K562 (cell line): ENCODE measurements at regions of chr1 and their contacts with region 1.

Region 1: DNA sequence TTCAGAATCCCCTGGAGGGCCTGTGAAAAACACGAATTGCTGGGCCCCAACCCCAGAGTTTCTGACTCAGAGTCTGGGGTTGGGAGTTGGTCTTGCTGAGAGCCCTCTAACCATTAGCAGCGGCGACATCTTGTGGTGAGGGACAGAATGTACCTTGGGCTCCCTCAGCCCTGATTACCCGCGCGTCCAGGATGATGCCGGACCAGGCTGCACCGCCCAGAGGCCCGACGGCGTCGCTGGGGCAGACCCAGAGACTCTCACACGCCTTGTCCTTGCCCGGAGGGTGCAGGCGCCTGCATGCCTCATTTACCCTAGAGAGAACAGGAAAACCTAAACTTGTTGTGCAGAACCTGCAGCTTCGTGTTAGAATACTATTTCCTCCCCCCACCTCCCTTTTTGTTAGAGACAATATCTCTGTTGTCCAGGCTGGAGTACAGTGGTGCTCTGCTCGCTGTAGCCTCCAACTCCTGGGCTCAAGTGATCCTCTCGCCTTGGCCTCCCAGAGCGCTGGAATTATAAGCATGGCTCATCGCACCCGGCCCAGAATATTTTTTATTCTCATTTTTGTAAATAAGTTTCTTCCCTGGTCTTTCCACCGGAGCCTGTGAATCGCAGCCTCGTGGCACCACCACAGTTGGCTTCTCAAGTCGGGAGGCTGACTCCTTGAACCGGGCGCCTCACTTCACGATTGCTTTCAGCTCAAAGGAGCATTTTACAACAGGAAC is 22.2 kb upstream of the RD3 start:
- DNase-seq: peak; percentile 91 to 96 (median 92)
- ATAC-seq: peak; percentile 91
- H3K4me3 ChIP-seq: no peak overlapping the region
- H3K27ac ChIP-seq: no peak overlapping the region
- H3K4me1 ChIP-seq: peaks cover 15 to 30% of the 10 kb centered on the region in 2 experiments
- H3K27me3 ChIP-seq: no peaks in the 10 kb centered on the region
- CTCF ChIP-seq: peak; percentile 95 to 98 (median 97)
- EP300 ChIP-seq: peak; percentile 22; the same call in 1 of the 2 replicates
- POLR2A ChIP-seq: no peak
- RAD21 ChIP-seq: peak; percentile 95 to 97

Region 2: DNA sequence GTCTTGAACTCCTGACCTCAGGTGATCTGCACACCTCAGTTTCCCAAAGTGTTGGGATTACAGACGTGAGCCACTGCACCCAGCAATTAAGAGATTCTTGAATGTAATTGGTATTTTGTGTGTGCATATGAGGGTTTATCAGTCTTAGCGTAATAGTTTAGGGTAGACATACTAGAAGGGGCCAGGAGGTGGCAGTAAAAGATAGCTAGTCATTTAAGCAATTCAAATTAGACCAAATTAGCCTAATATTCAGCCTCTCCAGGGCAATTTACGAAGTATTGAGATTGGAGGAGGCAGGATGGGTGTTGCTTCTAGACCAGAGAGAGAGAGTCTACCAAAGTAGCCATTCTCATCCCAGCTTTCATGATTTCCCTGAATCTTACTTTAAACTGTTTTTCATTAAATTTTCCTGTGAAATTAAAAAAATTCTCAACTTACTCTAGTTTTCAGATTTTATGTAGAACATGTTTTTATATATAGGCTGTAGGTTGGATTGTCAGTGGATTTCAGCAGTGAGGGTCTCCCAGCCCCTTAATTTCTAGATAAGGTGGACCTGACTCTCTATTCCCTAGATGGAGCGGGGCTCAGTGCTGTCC is 1065.8 kb before region 1 on chr1:
- CTCF ChIA-PET with region 1: interaction called, 3 read pairs
- POLR2A ChIA-PET with region 1: no interaction called
- in situ Hi-C with region 1: no loop called
- intact Hi-C with region 1: loop called (anchors 5 kb)
- DNase-seq: peak; percentile 33 to 44 (median 41)
- ATAC-seq: peak; percentile 82
- H3K4me3 ChIP-seq: no peak overlapping the region
- H3K27ac ChIP-seq: no peak overlapping the region
- H3K4me1 ChIP-seq: no peaks in the 10 kb centered on the region
- H3K27me3 ChIP-seq: peaks cover 0 to 8% of the 10 kb centered on the region in 2 experiments; a peak in 3 of 5 replicates
- CTCF ChIP-seq: peak; percentile 42 to 73 (median 56); a peak in 5 of 6 replicates
- EP300 ChIP-seq: no peak
- POLR2A ChIP-seq: no peak
- RAD21 ChIP-seq: peak; percentile 88 to 89

Region 3: GRCh38 chr1:211258756-211259637 is 255.2 kb before region 1 on chr1 and contains the start of gene RCOR3:
- CTCF ChIA-PET with region 1: no interaction called
- POLR2A ChIA-PET with region 1: no interaction called
- in situ Hi-C with region 1: no loop called
- intact Hi-C with region 1: loop called (anchors 2 kb)
- DNase-seq: peak; percentile 93 to 98 (median 94)
- ATAC-seq: peak; percentile 83
- H3K4me3 ChIP-seq: peak within 1 kb of the TSS; percentile 93
- H3K27ac ChIP-seq: peak within 1 kb of the TSS; percentile 97
- H3K4me1 ChIP-seq: peaks cover 7 to 19% of the 10 kb centered on the region in 2 experiments; a peak in 3 of 5 replicates
- H3K27me3 ChIP-seq: no peaks in the 10 kb centered on the region
- CTCF ChIP-seq: peak; percentile 70 to 84 (median 84)
- EP300 ChIP-seq: peak; percentile 53
- POLR2A ChIP-seq: peak; percentile 88
- RAD21 ChIP-seq: peak; percentile 42 to 54; a peak in 3 of 4 replicates
- polyA plus RNA-seq, gene RCOR3: 9.7 to 10.5 TPM

Region 4: GRCh38 chr1:211323156-211324063 is 190.8 kb before region 1 on chr1:
- CTCF ChIA-PET with region 1: interaction called, 13 read pairs
- POLR2A ChIA-PET with region 1: no interaction called
- in situ Hi-C with region 1: no loop called
- intact Hi-C with region 1: loop called (anchors 1 kb)
- DNase-seq: peak; percentile 42 to 85 (median 62)
- ATAC-seq: peak; percentile 79
- H3K4me3 ChIP-seq: no peak overlapping the region
- H3K27ac ChIP-seq: no peak overlapping the region
- H3K4me1 ChIP-seq: peaks cover 17 to 24% of the 10 kb centered on the region in 2 experiments
- H3K27me3 ChIP-seq: no peaks in the 10 kb centered on the region
- CTCF ChIP-seq: peak; percentile 91 to 95 (median 91)
- EP300 ChIP-seq: no peak
- POLR2A ChIP-seq: no peak
- RAD21 ChIP-seq: peak; percentile 92 to 95

Region 5: DNA sequence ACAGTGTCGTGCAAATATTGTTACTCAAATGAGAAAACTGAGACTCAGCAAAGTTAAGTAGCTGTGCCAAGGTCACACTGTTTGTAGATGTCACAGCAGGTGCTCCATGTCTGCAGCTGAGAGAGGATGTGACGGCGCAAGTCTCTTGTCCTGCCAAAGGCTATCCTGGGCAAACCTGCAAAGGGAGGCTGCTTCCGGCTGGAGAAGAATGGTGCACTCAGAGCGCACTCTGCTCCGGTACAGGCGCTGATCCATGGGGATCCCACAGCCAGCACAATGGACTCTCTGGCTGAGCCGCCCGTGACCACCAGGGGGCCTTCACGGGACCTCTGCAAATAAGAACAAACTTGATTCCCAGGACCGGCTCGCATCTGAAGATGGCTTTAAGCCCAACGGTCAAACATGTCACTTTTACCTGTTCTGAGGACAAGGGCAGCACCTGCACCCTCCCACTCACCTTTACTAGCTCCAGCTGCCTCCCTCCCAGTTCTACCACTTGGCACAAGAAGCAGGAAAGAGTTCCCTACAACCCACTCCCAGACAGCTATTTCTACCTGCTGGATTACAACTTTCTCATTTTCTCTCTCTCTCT is 44.2 kb before region 1 on chr1:
- CTCF ChIA-PET with region 1: no interaction called
- POLR2A ChIA-PET with region 1: no interaction called
- in situ Hi-C with region 1: no loop called
- intact Hi-C with region 1: loop called (anchors 1 kb)
- DNase-seq: peak; percentile 75 to 88 (median 78)
- ATAC-seq: peak; percentile 99
- H3K4me3 ChIP-seq: no peak overlapping the region
- H3K27ac ChIP-seq: no peak overlapping the region
- H3K4me1 ChIP-seq: peaks cover 0 to 5% of the 10 kb centered on the region in 2 experiments; a peak in 2 of 5 replicates
- H3K27me3 ChIP-seq: no peaks in the 10 kb centered on the region; a peak in 1 of 5 replicates
- CTCF ChIP-seq: peak; percentile 89 to 97 (median 92)
- EP300 ChIP-seq: no peak
- POLR2A ChIP-seq: no peak
- RAD21 ChIP-seq: peak; percentile 44 to 80; a peak in 3 of 4 replicates

Region 6: DNA sequence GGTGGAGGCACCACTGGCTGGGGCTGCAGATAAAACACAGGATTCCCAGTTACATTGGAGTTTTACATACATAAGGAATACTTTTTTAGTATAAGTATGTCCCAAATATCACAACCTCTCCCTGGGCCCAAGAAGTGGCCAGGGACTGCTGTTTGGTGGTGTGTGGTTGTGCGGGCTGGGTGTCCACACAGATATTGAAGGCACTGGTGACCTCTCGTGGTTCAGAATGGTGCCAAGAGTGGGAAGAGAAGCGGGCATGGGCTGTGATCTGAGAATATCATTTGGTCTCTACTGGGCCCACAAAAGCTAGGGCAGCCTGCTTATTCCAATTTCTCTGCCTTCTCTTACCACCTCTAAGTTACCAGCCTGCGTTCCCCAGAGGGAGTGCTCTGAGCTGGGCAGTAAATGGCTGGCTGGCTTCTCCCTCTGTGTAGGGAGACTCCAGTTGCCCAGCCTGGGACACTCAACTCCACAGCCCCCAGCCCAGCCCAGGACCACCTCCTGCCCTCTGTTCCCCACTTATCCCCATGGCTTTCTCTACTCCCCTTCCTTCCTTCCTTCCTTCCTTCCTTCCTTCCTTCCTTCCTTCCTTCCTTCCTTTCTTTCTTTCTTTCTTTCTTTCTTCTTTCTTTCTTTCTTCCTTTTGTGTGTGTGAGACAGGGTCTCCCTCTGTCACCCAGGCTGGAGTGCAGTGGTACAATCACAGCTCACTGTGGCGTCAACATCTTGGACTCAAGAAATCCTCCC is 20.5 kb after region 1 on chr1:
- CTCF ChIA-PET with region 1: no interaction called
- POLR2A ChIA-PET with region 1: no interaction called
- in situ Hi-C with region 1: no loop called
- intact Hi-C with region 1: no loop called
- DNase-seq: no peak
- ATAC-seq: peak; percentile 7; the same call in 2 of the 3 replicates
- H3K4me3 ChIP-seq: no peak overlapping the region
- H3K27ac ChIP-seq: no peak overlapping the region
- H3K4me1 ChIP-seq: peaks cover 7 to 18% of the 10 kb centered on the region in 2 experiments
- H3K27me3 ChIP-seq: no peaks in the 10 kb centered on the region
- CTCF ChIP-seq: no peak
- EP300 ChIP-seq: no peak
- POLR2A ChIP-seq: no peak
- RAD21 ChIP-seq: no peak

Region 7: DNA sequence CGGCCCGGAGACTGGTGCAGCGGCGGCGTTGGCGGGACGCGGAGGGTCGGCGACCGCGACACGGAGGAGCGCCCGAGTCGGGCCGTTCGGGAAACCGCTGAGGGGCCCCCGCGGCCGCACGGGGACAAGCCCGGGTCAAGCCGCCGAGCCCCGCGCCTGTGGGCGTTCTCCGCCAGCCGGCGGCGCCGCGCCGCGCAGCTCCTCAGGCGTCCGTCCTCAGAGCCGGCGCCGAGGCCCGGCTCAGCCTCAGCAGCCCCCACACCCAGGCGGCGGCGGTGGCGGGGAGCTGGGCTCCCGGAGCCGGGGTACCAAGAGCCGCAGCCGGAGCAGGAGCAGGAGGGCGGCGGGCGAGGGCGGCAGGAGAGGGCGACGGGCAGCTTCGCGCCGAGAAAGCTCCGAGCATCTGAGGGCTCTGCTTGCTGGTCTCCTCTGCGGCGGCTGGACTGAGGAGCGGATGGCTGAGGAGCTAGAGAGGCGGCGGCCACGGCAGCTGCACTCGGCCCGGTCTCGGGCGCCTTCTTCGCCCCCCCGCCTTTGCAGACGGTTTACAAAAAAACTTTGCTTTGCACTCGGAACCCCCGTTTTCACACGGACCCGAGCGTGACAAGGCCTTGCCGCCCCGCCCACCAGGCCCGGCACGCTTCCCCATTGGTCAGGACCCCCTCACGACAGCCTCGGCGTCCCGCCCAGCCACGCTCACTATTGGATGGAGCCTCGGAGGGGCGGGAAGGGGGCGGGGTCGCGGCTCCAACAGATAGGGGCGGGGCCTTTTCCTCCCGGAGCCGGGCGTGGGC is 64.6 kb after region 1 on chr1 and contains the start of gene SLC30A1:
- CTCF ChIA-PET with region 1: interaction called, 8 read pairs
- POLR2A ChIA-PET with region 1: no interaction called
- in situ Hi-C with region 1: no loop called
- intact Hi-C with region 1: loop called (anchors 1 kb)
- DNase-seq: peak; percentile 100
- ATAC-seq: peak; percentile 92
- H3K4me3 ChIP-seq: peak within 1 kb of the TSS; percentile 75
- H3K27ac ChIP-seq: peak within 1 kb of the TSS; percentile 84
- H3K4me1 ChIP-seq: peaks cover 26% of the 10 kb centered on the region in 2 experiments; a peak in 4 of 5 replicates
- H3K27me3 ChIP-seq: no peaks in the 10 kb centered on the region
- CTCF ChIP-seq: peak in 2 of 3 experiments; percentile 17 to 41; a peak in 1 of 6 replicates
- EP300 ChIP-seq: peak; percentile 23; the same call in 1 of the 2 replicates
- POLR2A ChIP-seq: peak; percentile 82
- RAD21 ChIP-seq: peak; percentile 17 to 31; a peak in 2 of 4 replicates
- polyA plus RNA-seq, gene SLC30A1: 4.1 to 4.2 TPM

Region 8: GRCh38 chr1:211625040-211625439 is 110.8 kb after region 1 on chr1:
- CTCF ChIA-PET with region 1: interaction called, 3 read pairs
- POLR2A ChIA-PET with region 1: no interaction called
- in situ Hi-C with region 1: no loop called
- intact Hi-C with region 1: loop called (anchors 1 kb)
- DNase-seq: peak in 3 of 4 experiments; percentile 48 to 68 (median 63)
- ATAC-seq: peak; percentile 77
- H3K4me3 ChIP-seq: no peak overlapping the region
- H3K27ac ChIP-seq: no peak overlapping the region
- H3K4me1 ChIP-seq: peaks cover 14 to 21% of the 10 kb centered on the region in 2 experiments; a peak in 4 of 5 replicates
- H3K27me3 ChIP-seq: no peaks in the 10 kb centered on the region
- CTCF ChIP-seq: peak; percentile 57 to 72 (median 64)
- EP300 ChIP-seq: no peak
- POLR2A ChIP-seq: no peak
- RAD21 ChIP-seq: peak; percentile 65 to 71